Activated T-helper 1 cell treated with anti-CD3 and anti-CD28 coated beads, Interleukin-12 subunit alpha, Interleukin-12 subunit beta, Interleukin-2, Interleukin-4 antibody, amounts not matched to agents 30 ng/mL and 10 ng/mL and 1 ng/mL, durations not matched to agents 14 hours and 24 hours and 36 hours (primary cell): ENCODE measurements at regions of chr1 and their contacts with region 1.

Region 1: DNA sequence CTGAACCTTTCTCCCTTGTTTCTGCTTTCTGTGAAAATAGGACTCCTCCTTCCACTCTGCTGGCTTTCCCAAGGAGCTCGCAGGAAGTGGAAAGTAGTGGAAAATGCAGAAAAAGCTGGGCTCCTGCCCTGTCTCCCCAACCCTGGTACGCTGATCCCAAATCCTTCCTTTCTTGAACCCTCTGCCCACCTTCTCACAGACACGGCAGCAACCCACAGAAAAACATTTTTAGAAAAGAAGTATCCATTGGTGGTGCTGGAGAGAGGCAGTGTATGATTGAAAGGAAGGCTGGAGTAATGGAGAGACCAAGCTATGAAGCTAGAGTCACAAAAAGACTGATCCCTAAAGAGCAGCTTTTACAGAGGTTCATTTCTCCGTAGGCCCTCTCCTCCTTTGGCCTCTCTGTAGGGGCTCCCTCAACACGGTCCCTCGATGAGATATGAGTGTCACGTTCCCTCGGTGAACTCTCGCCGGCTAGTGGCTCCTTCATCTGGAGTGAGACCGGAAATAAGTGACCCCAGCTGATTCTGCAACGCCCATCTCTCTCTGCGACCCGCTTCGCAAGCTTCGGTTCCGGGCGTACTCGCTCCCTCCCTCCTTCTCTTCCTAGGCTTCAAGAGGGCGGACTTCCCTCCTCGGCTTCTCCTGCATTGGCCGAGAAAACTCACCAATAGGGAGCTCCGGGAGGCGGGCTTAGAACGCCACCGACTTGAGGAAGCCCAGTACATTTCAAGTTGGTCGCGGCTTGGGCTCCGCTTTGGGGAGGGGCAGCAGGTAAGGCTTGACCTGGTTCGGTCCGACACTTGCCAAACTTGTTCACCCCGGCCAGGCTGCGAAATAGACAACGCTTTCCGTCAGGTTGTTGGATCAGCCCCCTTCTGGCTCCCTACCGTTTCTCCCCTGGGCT is at the starts of genes ANKRD34A and POLR3GL:
- DNase-seq: peak; percentile 89
- H3K4me3 Mint-ChIP-seq: peak within 1 kb of the TSS; percentile 93
- H3K27ac Mint-ChIP-seq: peak within 1 kb of the TSS; percentile 87
- H3K4me1 Mint-ChIP-seq: peaks cover 48% of the 10 kb centered on the region
- H3K27me3 Mint-ChIP-seq: no peaks in the 10 kb centered on the region
- total RNA-seq, gene ANKRD34A: 4.8 and 5.1 TPM in 2 replicates
- total RNA-seq, gene POLR3GL: 10.6 and 11.6 TPM in 2 replicates

Region 2: DNA sequence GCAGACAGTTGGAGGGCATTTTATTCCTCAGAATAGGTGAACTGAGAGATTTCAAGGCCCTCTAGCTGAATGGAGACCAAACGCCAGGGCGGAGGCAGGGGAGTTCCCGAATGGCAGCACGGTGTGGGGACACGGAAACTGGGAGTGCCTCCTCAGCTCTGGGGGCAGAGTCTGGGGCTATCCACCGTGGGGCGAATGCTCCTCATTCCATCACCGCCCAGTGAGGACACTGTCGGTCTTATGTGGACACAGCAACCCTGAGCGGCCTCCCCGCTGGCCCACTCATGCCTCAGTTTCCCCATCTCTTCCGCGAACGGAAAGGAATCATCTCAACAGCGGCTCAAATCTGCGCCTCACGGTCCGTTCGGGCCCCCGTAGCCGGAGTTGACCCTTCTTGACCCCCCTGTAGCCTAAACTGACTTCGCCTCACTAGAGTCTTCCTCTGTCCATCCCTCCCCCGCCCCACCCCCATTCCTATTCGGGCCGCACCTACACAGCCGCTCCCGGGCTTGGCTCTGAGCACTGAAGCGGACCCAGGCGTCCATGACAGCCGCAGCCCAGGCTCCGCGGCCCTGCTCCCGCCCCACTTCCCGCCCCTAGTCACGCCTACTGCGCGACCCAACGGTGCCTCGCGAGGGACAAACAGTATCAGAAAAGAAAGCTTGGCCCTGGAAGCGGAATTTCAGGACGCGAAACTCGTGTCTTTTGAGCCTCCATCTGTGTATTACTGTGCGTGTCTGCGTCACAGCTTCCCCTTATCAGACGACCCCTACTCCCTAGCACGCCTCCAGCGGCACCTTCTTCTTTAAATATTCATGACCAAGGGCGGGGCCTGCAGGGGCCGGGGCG is 45.9 kb before region 1 on chr1 and contains the start of gene PEX11B:
- intact Hi-C with region 1: loop called (anchors 1 kb)
- DNase-seq: peak; percentile 87
- H3K4me3 Mint-ChIP-seq: peak within 1 kb of the TSS; percentile 88
- H3K27ac Mint-ChIP-seq: peak within 1 kb of the TSS; percentile 91
- H3K4me1 Mint-ChIP-seq: peaks cover 41% of the 10 kb centered on the region
- H3K27me3 Mint-ChIP-seq: no peaks in the 10 kb centered on the region
- total RNA-seq, gene PEX11B: 30.6 and 31.2 TPM in 2 replicates

Region 3: DNA sequence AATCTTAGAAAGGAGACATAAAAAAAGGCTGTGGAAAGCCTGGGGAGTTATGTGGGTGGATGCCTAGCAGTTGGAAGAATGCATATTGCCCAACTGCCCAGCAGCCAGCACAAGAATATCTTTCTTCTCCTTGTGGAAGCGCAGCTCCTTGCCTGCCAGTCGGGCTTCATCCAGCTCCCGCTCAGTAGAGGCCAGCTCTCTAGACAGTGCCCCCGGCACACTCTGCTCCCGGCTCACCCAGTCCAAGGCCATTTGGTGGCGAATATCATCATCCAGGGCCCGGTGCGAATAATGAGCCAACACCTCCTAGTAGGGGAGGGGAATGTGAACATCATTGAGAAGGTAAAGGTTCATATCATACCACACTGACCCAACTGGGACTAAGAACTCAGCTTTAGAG is 28.0 kb before region 1 on chr1:
- intact Hi-C with region 1: no loop called
- DNase-seq: no peak
- H3K4me3 Mint-ChIP-seq: no peak overlapping the region
- H3K27ac Mint-ChIP-seq: no peak overlapping the region
- H3K4me1 Mint-ChIP-seq: peaks cover 18% of the 10 kb centered on the region
- H3K27me3 Mint-ChIP-seq: no peaks in the 10 kb centered on the region

Region 4: DNA sequence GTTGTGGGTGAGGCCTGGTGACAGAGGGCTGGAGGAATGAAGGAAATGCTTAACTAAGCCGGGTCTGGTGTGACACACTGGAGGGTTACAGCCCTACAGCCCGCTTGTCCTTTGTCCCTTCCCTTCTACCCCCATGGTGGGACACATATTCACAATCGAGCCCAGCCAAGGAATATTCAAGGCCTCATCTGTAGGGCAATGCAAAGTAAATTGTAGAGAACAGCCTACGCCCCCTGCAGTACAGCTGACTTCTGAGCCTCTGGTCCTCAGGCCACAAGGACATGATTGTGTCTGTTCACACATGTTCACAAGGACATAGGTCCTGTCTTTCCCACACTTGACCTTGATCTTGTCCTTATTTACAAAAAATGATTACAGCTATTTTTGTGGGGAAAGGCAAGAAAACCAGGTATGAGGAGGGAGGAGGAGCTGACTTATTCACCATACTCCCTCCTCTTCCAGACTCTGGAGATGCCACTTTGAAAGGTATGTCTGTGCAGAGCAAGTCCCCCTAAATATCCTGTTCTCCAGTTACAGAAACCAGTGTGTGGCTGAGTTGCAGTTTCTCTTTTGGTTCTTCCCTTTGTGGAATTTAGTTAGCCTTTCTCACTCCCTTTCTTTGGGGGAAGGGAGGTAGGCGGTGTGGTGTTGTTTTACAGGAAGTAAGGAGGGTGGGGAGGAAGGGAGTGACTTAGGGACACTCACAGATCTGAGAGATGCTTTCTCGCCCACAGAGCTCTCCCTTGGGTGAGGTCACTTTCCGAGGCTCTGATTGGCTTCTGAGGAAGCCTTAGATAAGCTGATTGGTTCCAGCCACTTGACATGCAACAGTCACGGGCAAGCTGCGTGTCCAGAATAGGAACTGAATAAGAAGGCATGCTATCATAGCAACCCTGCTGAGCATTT is 14.9 kb after region 1 on chr1:
- intact Hi-C with region 1: loop called (anchors 1 kb)
- DNase-seq: peak; percentile 87
- H3K4me3 Mint-ChIP-seq: no peak overlapping the region
- H3K27ac Mint-ChIP-seq: no peak overlapping the region
- H3K4me1 Mint-ChIP-seq: peaks cover 9% of the 10 kb centered on the region
- H3K27me3 Mint-ChIP-seq: no peaks in the 10 kb centered on the region

Region 5: DNA sequence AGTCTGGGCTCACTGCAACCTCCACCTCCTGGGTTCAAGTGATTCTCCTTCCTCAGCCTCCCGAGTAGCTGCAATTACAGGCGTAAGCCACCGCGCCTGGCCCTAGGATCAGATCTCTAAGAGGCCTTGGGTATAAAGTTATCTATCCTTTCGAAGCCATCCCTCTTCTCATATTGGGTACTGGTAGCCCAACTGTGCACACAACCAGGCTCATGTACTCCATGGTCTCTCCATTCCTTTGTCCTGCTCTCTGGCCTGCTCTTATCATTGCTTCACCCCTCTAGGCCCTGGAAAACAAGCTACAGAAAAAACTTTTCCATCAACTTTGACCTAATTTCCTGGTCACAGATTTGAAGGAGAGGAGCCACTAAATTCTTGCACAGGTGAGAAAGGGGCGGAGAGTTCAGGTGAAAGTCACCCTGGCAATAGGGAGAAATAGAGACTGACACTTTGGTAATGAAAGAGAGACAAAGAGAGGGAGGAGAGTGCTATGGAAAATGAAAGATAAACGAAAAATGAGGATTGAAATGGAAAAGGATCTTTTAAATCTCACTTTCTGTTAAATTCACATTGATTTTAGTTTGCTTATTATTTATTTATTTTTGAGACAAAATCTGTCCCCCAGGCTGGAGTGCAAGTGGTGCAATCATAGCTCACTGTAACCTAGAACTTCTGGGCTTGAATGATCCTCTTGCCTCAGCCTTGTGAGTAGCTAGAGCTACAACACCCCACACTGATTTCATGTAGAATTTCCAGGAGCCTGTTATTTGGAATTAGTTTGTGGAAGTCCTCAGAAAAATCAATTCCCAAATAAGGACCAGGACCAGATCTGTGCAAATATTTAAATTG is 26.2 kb after region 1 on chr1:
- intact Hi-C with region 1: no loop called
- DNase-seq: no peak
- H3K4me3 Mint-ChIP-seq: peak overlapping the region; percentile 37
- H3K27ac Mint-ChIP-seq: peak overlapping the region; percentile 13
- H3K4me1 Mint-ChIP-seq: peaks cover 69% of the 10 kb centered on the region
- H3K27me3 Mint-ChIP-seq: no peaks in the 10 kb centered on the region

Region 6: DNA sequence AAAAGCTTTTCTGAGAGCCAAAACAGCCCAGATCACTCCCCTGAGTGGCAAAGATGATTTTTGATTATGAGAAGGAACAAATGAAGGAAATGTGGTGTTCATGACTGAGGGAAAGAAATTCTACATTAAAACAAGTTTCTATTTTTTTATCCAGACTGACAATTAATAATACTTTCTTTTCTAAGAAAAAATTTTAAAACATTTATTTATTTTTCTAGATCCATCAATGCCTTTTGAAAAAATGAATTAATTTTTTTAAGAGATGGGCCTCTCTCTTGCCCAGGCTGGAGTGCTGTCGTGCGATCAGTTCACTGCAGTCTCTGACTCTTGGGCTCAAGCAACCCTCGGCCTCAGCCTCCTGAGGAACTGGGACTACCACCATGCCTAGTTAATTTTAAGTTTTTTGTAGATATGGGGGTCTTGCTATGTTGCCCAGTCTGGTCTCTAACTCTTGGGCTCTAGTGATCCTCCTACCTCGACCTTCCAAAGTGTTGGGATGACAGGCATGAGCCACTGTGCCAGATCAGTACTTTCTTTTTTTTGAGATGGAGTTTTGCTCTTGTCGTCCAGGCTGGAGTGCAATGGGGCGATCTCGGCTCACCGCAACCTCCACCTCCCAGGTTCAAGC is 43.4 kb after region 1 on chr1:
- intact Hi-C with region 1: loop called (anchors 1 kb)
- DNase-seq: no peak
- H3K4me3 Mint-ChIP-seq: no peak overlapping the region
- H3K27ac Mint-ChIP-seq: peak overlapping the region; percentile 76
- H3K4me1 Mint-ChIP-seq: peaks cover 41% of the 10 kb centered on the region
- H3K27me3 Mint-ChIP-seq: no peaks in the 10 kb centered on the region